Posterior cingulate gyrus (tissue), 11 donors: ENCODE measurements at regions of chr2 and their contacts with region 1.

Region 1: GRCh38 chr2:16773080-16773713 is 107.6 kb upstream of the CYRIA start:
- DNase-seq: peak in 9 of 10 donors; percentile 26 to 94 (median 57)

Region 2: DNA sequence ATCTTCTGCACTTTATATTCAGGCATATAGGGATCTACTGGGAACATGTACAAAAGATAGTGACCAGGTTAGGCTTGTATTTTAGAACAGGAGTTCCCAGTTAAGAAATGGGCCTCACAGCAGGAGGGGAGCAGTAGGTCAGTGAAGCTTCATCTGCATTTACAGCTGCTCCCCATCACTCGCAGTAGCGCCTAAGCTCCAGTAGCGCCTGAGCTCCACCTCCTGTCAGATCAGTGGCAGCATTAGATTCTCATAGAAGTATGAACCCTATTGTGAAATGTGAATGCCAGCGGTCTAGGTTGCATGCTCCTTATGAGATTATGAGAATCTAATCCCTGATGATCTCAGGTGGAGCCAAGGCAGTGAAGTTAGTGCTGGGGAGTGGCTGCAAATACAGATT is 116.9 kb after region 1 on chr2:
- intact Hi-C with region 1: loop called (anchors 5 kb)
- DNase-seq: peak in 2 of 10 donors; percentile 14 to 77

Region 3: GRCh38 chr2:17148407-17149145 is 375.4 kb after region 1 on chr2:
- intact Hi-C with region 1: loop called (anchors 2 kb)
- DNase-seq: peak in 5 of 10 donors; percentile 11 to 88 (median 77)

Region 4: GRCh38 chr2:17309741-17310339 is 536.6 kb after region 1 on chr2:
- intact Hi-C with region 1: loop called (anchors 2 kb)
- DNase-seq: peak in 2 of 10 donors; percentile 11 to 35

Region 5: GRCh38 chr2:17540093-17540812 is 767.1 kb after region 1 on chr2 and contains the start of gene VSNL1:
- intact Hi-C with region 1: loop called (anchors 5 kb)
- DNase-seq: peak; percentile 52 to 98 (median 86)

Region 6: GRCh38 chr2:17672583-17673317 is 899.6 kb after region 1 on chr2:
- intact Hi-C with region 1: loop called (anchors 1 kb)
- DNase-seq: no peak